Esophagus muscularis mucosa (tissue), 4 donors: ENCODE measurements at regions of chr1 and their contacts with region 1.

Region 1: GRCh38 chr1:46179138-46180081 is 3.1 kb upstream of the P3R3URF start:
- DNase-seq: peak; percentile 94
- H3K4me3 ChIP-seq: no peak overlapping the region
- H3K27ac ChIP-seq: peak overlapping the region in 2 of 4 donors; percentile 5 to 42
- H3K4me1 ChIP-seq: peaks cover 34 to 46% (median 44%) of the 10 kb centered on the region in 4 donors
- H3K27me3 ChIP-seq: no peaks in the 10 kb centered on the region
- CTCF ChIP-seq: peak; percentile 85 to 98 (median 95)
- EP300 ChIP-seq: no peak
- POLR2A ChIP-seq: no peak

Region 2: GRCh38 chr1:45876000-45876617 is 303.3 kb before region 1 on chr1:
- intact Hi-C with region 1: loop called (anchors 10 kb)
- DNase-seq: no peak
- H3K4me3 ChIP-seq: no peak overlapping the region
- H3K27ac ChIP-seq: no peak overlapping the region
- H3K4me1 ChIP-seq: peaks cover 0 to 1% (median 0%) of the 10 kb centered on the region in 4 donors
- H3K27me3 ChIP-seq: no peaks in the 10 kb centered on the region
- CTCF ChIP-seq: no peak
- EP300 ChIP-seq: no peak
- POLR2A ChIP-seq: no peak

Region 3: DNA sequence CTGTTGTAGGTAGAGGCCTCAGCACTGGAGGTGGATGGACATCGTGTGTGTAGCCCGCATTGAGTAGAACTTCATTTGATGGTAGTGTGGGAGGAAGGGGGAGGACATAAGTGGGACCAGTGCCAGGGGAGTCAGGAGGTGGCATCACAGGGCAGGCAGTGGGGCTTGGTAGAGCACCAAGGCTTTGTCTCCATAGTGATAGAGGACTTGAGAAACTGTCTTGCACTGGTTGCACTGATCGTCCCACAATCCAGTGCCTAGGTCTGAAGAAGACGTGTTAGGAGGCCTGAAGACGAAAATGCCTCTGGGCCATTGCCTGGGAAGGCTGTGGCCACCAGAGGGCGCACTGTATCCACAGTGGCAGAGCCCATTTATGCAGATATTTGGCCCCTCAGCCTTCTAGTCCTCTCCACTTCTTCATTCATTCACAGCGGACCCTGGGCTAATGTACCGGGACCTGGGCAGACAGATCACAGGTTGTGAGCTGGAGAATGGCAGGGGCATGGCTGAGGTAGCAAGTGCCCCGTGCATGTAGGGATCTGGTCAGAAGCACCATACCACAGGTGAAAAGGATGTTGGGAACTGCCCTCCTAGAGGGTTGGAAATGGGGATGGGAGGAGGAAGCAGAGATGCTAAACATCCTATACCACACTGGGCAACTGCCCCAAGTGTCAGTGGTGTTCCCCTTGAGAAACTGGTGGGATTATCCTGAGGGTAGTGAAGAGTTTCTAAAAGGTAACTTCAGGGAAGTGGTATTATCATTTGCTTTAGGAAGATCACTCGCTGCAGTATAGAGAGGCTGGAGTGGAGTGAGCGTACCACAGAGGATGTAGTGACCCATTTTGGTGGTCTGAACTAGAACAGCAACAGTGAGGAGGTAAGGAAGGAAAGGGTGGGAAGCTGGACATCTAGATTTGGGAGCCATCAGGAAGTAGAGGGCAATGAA is 142.2 kb before region 1 on chr1:
- intact Hi-C with region 1: loop called (anchors 1 kb)
- DNase-seq: peak; percentile 96
- H3K4me3 ChIP-seq: no peak overlapping the region
- H3K27ac ChIP-seq: peak overlapping the region in 3 of 4 donors; percentile 3 to 45 (median 11)
- H3K4me1 ChIP-seq: peaks cover 31 to 45% (median 38%) of the 10 kb centered on the region in 4 donors
- H3K27me3 ChIP-seq: no peaks in the 10 kb centered on the region
- CTCF ChIP-seq: peak; percentile 96 to 99 (median 98)
- EP300 ChIP-seq: no peak
- POLR2A ChIP-seq: no peak

Region 4: GRCh38 chr1:46132529-46133180 is 46.8 kb before region 1 on chr1 and contains the start of gene PIK3R3:
- intact Hi-C with region 1: loop called (anchors 5 kb)
- DNase-seq: peak; percentile 99
- H3K4me3 ChIP-seq: peak within 1 kb of the TSS; percentile 63 to 79 (median 72)
- H3K27ac ChIP-seq: peak within 1 kb of the TSS; percentile 92 to 96 (median 94)
- H3K4me1 ChIP-seq: peaks cover 26 to 52% (median 39%) of the 10 kb centered on the region in 4 donors
- H3K27me3 ChIP-seq: no peaks in the 10 kb centered on the region
- CTCF ChIP-seq: peak in 1 of 3 experiments; percentile 10
- EP300 ChIP-seq: no peak
- POLR2A ChIP-seq: peak; percentile 89
- total RNA-seq, gene PIK3R3: 13.7 to 34.3 (median 21.4) TPM

Region 5: DNA sequence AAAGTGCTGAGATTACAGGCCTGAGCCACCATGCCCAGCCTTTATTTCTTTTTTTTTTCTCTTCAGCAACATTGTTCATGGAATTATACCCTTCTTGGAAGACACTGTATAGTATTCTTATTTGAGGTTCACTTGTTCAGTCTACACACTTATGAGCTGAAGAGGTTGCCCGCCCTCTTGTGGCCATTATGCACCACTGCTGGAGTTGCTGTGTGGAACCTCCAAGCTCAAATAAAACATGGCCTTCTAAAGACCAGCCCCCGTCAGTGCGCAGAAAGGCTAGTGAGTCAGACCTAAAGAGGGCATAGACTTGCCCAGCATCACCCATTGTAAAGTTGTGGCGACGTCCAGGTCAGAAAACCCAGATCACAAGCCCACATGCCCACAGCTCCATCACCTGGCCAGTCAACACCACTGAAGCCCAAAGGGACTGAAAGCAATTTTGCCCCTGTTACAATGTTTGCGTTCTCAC is 44.1 kb after region 1 on chr1:
- intact Hi-C with region 1: loop called (anchors 5 kb)
- DNase-seq: no peak
- H3K4me3 ChIP-seq: no peak overlapping the region
- H3K27ac ChIP-seq: no peak overlapping the region
- H3K4me1 ChIP-seq: peaks cover 8 to 11% (median 10%) of the 10 kb centered on the region in 4 donors
- H3K27me3 ChIP-seq: no peaks in the 10 kb centered on the region
- CTCF ChIP-seq: peak; percentile 86 to 92 (median 86)
- EP300 ChIP-seq: no peak
- POLR2A ChIP-seq: no peak

Region 6: DNA sequence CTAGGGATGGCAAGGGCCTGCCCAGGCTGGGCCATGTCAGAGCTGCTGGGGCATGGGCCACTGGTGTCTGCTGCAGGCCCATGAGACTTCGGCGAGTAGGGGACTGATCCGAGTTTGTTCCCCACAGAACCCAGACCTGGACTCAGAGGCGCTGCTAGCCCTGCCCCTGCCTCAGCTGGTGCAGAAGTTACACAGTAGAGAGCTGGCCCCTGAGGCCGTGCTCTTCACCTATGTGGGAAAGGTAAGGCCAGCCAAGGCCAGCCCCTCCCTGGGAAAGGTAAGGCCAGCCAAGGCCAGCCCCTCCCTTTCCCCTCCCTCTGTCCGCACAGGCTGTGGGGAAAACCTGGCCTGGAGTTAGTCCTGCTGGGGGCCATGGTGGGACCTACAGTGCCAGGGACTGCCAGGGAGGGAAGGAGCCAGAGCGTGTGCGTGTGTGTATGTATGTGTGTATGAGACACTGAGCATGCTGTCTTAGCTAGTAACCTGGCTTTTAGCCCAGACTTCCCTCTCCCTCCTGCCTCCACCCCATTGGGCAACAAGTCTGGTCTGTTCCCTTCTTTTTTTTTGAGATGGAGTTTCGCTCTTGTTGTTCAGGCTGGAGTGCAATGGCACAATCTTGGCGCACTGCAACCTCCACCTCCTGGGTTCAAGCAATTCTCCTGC is 222.7 kb after region 1 on chr1:
- intact Hi-C with region 1: no loop called
- DNase-seq: no peak
- H3K4me3 ChIP-seq: peak overlapping the region in 1 of 4 donors; percentile 14
- H3K27ac ChIP-seq: peak overlapping the region in 3 of 4 donors; percentile 40 to 53 (median 45)
- H3K4me1 ChIP-seq: peaks cover 17 to 31% (median 27%) of the 10 kb centered on the region in 4 donors
- H3K27me3 ChIP-seq: no peaks in the 10 kb centered on the region
- CTCF ChIP-seq: no peak
- EP300 ChIP-seq: no peak
- POLR2A ChIP-seq: no peak